Activated naive CD4-positive, alpha-beta T cell treated with anti-CD3 and anti-CD28 coated beads for 36 hours (primary cell): ENCODE measurements at regions of chr7 and their contacts with region 1.

Region 1: GRCh38 chr7:135147899-135148721 is at the start of gene TMEM140:
- DNase-seq: peak; percentile 72
- H3K4me3 Mint-ChIP-seq: peak within 1 kb of the TSS; percentile 81
- H3K27ac Mint-ChIP-seq: peak within 1 kb of the TSS; percentile 91
- H3K4me1 Mint-ChIP-seq: peaks cover 49% of the 10 kb centered on the region
- H3K27me3 Mint-ChIP-seq: no peaks in the 10 kb centered on the region
- total RNA-seq, gene TMEM140: 8.1 to 9.2 TPM

Region 2: GRCh38 chr7:134316539-134317344 is 831.4 kb before region 1 on chr7 and contains the start of gene SLC35B4:
- CTCF ChIA-PET with region 1: no interaction called
- intact Hi-C with region 1: loop called (anchors 2 kb)
- DNase-seq: peak; percentile 97
- H3K4me3 Mint-ChIP-seq: peak within 1 kb of the TSS; percentile 92
- H3K27ac Mint-ChIP-seq: peak within 1 kb of the TSS; percentile 77
- H3K4me1 Mint-ChIP-seq: peaks cover 16% of the 10 kb centered on the region
- H3K27me3 Mint-ChIP-seq: no peaks in the 10 kb centered on the region
- total RNA-seq, gene SLC35B4: 7.9 to 10.3 TPM

Region 3: GRCh38 chr7:134669845-134670373 is 478.2 kb before region 1 on chr7:
- CTCF ChIA-PET with region 1: no interaction called
- intact Hi-C with region 1: loop called (anchors 5 kb)
- DNase-seq: peak; percentile 88
- H3K4me3 Mint-ChIP-seq: peak overlapping the region; percentile 65
- H3K27ac Mint-ChIP-seq: peak overlapping the region; percentile 85
- H3K4me1 Mint-ChIP-seq: peaks cover 52% of the 10 kb centered on the region
- H3K27me3 Mint-ChIP-seq: no peaks in the 10 kb centered on the region

Region 4: DNA sequence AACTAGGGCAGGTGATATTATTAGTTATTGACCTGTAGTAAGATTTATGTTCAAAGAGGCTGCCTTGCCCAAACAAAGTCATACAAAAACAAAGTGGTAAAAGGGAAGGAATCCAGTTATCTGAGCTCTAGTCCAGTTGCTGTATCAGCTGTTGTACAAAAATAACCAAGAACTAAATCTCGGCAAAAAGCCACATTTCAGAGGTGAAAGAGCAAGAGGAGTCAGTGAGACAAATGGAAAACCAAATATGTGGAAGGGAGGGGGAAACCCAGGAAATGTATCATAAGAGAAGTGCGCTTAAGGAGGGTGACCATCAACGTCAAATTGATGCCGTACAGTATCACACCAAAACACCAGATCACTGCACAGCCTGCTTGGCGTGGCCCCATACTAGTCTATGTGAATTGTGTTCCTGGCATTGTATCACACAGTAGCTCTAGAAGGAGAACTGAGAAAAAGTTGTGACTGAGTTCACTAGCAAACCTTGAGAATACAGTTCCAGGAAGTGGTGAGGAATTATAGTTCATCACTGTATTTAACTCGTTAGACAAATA is 155.4 kb before region 1 on chr7:
- CTCF ChIA-PET with region 1: no interaction called
- intact Hi-C with region 1: loop called (anchors 1 kb)
- DNase-seq: peak; percentile 63
- H3K4me3 Mint-ChIP-seq: no peak overlapping the region
- H3K27ac Mint-ChIP-seq: peak overlapping the region; percentile 74
- H3K4me1 Mint-ChIP-seq: peaks cover 67% of the 10 kb centered on the region
- H3K27me3 Mint-ChIP-seq: no peaks in the 10 kb centered on the region

Region 5: DNA sequence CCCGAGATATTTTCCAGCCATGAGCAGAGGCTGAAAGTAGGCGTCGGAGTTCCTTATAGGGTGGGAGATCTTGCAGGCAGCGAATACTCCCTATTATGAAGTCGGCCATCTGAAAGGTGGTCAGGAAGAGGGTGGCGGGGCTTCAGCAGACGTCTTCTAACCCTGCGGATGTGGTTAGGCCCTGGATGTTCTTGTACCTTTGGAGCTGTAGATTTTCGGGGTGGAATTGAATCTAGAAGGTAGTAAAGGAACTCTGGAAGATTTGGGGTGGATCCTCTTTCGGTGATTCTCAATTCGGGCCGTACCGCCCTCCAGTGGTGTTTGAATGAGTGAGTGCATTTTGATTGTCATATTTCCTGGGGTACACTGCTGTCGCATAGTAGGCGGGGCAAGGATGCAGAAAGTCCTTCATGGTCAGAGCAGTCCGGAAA is 410.2 kb after region 1 on chr7:
- CTCF ChIA-PET with region 1: no interaction called
- intact Hi-C with region 1: loop called (anchors 5 kb)
- DNase-seq: peak; percentile 79
- H3K4me3 Mint-ChIP-seq: no peak overlapping the region
- H3K27ac Mint-ChIP-seq: no peak overlapping the region
- H3K4me1 Mint-ChIP-seq: peaks cover 29% of the 10 kb centered on the region
- H3K27me3 Mint-ChIP-seq: no peaks in the 10 kb centered on the region

Region 6: DNA sequence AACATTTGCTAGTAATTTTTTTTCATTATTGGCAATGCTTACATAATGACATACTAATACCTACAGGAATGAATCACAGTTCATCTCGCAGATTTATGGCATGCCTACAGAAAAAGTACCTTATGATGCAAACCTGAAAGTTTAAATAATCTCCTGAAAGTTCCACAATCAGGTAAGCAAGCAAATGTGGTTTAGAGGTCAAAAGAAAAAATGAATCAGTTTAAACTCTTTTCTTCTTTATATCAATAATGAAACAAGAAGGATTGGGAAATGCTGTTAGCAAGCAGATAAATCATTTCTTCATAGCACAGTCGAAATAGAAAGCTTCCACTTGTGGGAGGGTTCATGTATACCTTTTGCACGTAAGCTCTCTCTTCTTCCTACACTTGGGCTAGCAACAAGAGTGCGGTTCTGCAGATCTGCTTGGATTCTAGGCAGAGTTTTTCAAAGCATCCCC is 882.8 kb after region 1 on chr7:
- CTCF ChIA-PET with region 1: no interaction called
- intact Hi-C with region 1: loop called (anchors 5 kb)
- DNase-seq: peak; percentile 38
- H3K4me3 Mint-ChIP-seq: no peak overlapping the region
- H3K27ac Mint-ChIP-seq: peak overlapping the region; percentile 80
- H3K4me1 Mint-ChIP-seq: peaks cover 59% of the 10 kb centered on the region
- H3K27me3 Mint-ChIP-seq: peaks cover 13% of the 10 kb centered on the region